Activated CD4-positive, alpha-beta memory T cell treated with anti-CD3 and anti-CD28 coated beads for 36 hours (primary cell): ENCODE measurements at regions of chr6 and their contacts with region 1.

Region 1: DNA sequence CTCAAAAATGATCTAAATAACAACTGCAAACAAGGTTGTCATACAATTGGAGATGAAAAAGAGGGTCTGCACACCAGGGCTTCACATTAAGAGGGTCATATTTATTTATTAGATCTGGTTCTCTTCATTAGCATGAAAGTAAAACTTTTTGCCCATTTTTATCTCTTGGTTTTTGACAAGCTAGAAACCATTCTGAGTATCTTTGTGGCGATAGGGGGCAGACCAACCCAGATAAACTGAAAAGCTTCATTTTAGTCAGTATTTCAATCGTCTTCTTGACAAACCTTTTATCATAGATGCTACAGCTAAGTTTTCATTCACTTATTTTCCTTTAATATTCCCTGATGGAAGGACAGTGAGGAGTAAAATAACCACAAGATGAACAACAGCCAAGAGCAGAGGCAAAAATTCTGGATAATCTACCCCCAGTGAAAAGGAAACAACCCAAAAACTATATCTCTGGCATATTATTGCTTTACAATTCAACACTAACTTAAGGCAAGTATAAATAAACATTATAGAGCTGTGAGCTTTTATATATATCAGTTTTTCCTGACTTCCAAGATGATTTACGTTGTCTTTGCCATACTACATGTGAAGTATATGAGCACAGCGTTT is 45.2 kb downstream of the THEMIS start:
- DNase-seq: peak; percentile 54
- H3K4me3 Mint-ChIP-seq: peak overlapping the region; percentile 38
- H3K27ac Mint-ChIP-seq: peak overlapping the region; percentile 30
- H3K4me1 Mint-ChIP-seq: peaks cover 76% of the 10 kb centered on the region
- H3K27me3 Mint-ChIP-seq: no peaks in the 10 kb centered on the region

Region 2: DNA sequence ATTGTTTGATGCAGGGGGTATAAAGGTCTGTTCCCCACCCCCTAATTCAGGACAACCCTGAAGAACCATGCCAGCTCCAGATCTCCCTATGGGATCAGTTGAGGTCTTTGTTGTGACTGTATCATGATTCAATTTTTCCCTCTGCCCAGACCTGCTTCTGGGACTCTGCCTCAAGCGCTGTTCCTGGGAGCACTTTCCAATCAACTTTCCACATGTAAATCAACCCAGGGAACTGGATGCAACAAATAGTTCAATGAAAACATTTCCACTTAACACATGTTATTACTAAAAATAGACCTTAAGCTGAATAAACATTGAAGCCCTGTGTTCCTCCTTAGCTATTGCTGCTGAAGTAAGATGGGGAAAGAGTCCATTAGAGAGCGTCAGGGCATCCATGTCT is 139.2 kb before region 1 on chr6:
- CTCF ChIA-PET with region 1: no interaction called
- POLR2A ChIA-PET with region 1: no interaction called
- intact Hi-C with region 1: no loop called
- DNase-seq: no peak
- H3K4me3 Mint-ChIP-seq: no peak overlapping the region
- H3K27ac Mint-ChIP-seq: no peak overlapping the region
- H3K4me1 Mint-ChIP-seq: peaks cover 1% of the 10 kb centered on the region
- H3K27me3 Mint-ChIP-seq: no peaks in the 10 kb centered on the region

Region 3: GRCh38 chr6:127841811-127842210 is 13.8 kb before region 1 on chr6:
- CTCF ChIA-PET with region 1: interaction called, 21 read pairs
- POLR2A ChIA-PET with region 1: no interaction called
- intact Hi-C with region 1: no loop called
- DNase-seq: no peak
- H3K4me3 Mint-ChIP-seq: no peak overlapping the region
- H3K27ac Mint-ChIP-seq: no peak overlapping the region
- H3K4me1 Mint-ChIP-seq: peaks cover 48% of the 10 kb centered on the region
- H3K27me3 Mint-ChIP-seq: no peaks in the 10 kb centered on the region

Region 4: GRCh38 chr6:127907960-127908640 is 52.4 kb after region 1 on chr6:
- CTCF ChIA-PET with region 1: interaction called, 13 read pairs
- POLR2A ChIA-PET with region 1: no interaction called
- intact Hi-C with region 1: no loop called
- DNase-seq: peak; percentile 56
- H3K4me3 Mint-ChIP-seq: peak overlapping the region; percentile 70
- H3K27ac Mint-ChIP-seq: peak overlapping the region; percentile 86
- H3K4me1 Mint-ChIP-seq: peaks cover 67% of the 10 kb centered on the region
- H3K27me3 Mint-ChIP-seq: no peaks in the 10 kb centered on the region

Region 5: GRCh38 chr6:128124670-128125069 is 269.0 kb after region 1 on chr6:
- CTCF ChIA-PET with region 1: interaction called, 3 read pairs
- POLR2A ChIA-PET with region 1: no interaction called
- intact Hi-C with region 1: loop called (anchors 10 kb)
- DNase-seq: peak; percentile 24
- H3K4me3 Mint-ChIP-seq: no peak overlapping the region
- H3K27ac Mint-ChIP-seq: no peak overlapping the region
- H3K4me1 Mint-ChIP-seq: peaks cover 5% of the 10 kb centered on the region
- H3K27me3 Mint-ChIP-seq: no peaks in the 10 kb centered on the region

Region 6: GRCh38 chr6:128520436-128521281 is 665.0 kb after region 1 on chr6 and contains the start of gene PTPRK:
- CTCF ChIA-PET with region 1: interaction called, 13 read pairs
- POLR2A ChIA-PET with region 1: no interaction called
- intact Hi-C with region 1: loop called (anchors 1 kb)
- DNase-seq: peak; percentile 92
- H3K4me3 Mint-ChIP-seq: peak within 1 kb of the TSS; percentile 85
- H3K27ac Mint-ChIP-seq: peak within 1 kb of the TSS; percentile 23
- H3K4me1 Mint-ChIP-seq: peaks cover 9% of the 10 kb centered on the region
- H3K27me3 Mint-ChIP-seq: peaks cover 55% of the 10 kb centered on the region
- total RNA-seq, gene PTPRK: 1.8 to 2.2 TPM